Astrocyte of the cerebellum (primary cell): ENCODE measurements at regions of chr16 and their contacts with region 1.

Region 1: GRCh38 chr16:53695070-53695469 is 8.6 kb downstream of the RPGRIP1L start:
- DNase-seq: peak; percentile 39
- H3K4me3 ChIP-seq: no peak overlapping the region
- CTCF ChIP-seq: no peak

Region 2: DNA sequence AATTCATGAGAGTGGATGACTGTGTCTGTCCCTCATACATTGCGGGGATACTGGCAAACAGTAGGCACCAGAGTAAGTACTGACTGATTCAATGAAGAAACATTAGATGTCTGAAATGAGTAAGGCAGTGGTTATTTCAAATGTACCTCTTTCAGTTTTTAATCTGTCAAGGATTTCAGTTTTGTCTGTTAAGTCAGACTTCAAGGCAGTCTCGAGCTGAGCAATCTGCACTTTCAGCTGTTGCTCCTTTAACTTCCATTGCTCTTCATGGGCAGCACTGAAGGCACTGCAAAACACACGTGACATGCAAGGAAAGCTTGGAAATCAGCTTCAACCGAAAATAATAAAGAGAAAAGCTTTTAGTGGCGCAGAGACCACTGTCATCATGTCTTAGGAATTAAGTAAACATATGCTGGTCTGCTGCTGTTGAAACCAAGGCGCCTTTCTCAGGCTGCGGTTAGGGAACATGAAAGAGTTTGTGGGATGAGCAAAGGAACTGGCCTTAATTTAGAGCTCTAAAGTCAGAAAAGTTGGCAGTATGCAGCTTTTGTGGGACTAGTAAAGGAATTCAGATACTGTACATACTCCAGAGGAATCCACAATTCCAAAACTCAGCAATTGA is 30.2 kb before region 1 on chr16:
- in situ Hi-C with region 1: loop called (anchors 5 kb)
- DNase-seq: peak; percentile 59
- H3K4me3 ChIP-seq: no peak overlapping the region
- CTCF ChIP-seq: no peak

Region 3: GRCh38 chr16:53737552-53737951 is 42.5 kb after region 1 on chr16:
- in situ Hi-C with region 1: no loop called
- DNase-seq: no peak
- H3K4me3 ChIP-seq: no peak overlapping the region
- CTCF ChIP-seq: no peak